HEK293 (cell line): ENCODE measurements at regions of chr7 and their contacts with region 1.

Region 1: DNA sequence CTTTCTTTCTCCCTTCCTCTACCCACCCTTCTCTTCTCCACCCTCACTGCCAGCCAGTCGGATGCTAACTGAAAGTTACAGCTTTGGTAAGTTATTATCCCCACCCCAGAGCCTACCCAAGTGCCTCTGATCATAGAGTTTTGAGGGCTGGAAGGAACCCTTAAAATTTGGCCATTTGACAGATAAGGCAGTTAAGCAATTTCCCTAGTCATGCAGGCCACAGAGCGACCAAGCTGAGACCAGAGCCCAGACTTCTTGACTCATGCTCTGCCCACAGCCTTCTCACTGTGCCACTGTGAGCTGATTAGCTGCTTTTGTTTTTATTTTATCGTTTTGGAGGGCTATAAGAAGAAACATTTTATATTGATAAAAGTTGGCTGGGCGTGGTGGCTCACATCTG is 17.2 kb downstream of the SAP25 start:
- H3K4me3 ChIP-seq: no peak overlapping the region
- H3K27ac ChIP-seq: no peak overlapping the region
- H3K4me1 ChIP-seq: no peaks in the 10 kb centered on the region
- CTCF ChIP-seq: no peak

Region 2: GRCh38 chr7:100469227-100470044 is 87.1 kb before region 1 on chr7:
- CTCF ChIA-PET with region 1: interaction called, 85 read pairs
- POLR2A ChIA-PET with region 1: interaction called, 4 read pairs
- H3K4me3 ChIP-seq: no peak overlapping the region
- H3K27ac ChIP-seq: no peak overlapping the region
- H3K4me1 ChIP-seq: peaks cover 3% of the 10 kb centered on the region; the same call in 1 of the 2 replicates
- CTCF ChIP-seq: peak; percentile 93

Region 3: GRCh38 chr7:100478966-100479665 is 77.4 kb before region 1 on chr7 and contains the start of gene TSC22D4:
- CTCF ChIA-PET with region 1: interaction called, 20 read pairs
- POLR2A ChIA-PET with region 1: interaction called, 9 read pairs
- H3K4me3 ChIP-seq: peak within 1 kb of the TSS; percentile 84
- H3K27ac ChIP-seq: peak within 1 kb of the TSS; percentile 80
- H3K4me1 ChIP-seq: peaks cover 7% of the 10 kb centered on the region
- CTCF ChIP-seq: no peak

Region 4: DNA sequence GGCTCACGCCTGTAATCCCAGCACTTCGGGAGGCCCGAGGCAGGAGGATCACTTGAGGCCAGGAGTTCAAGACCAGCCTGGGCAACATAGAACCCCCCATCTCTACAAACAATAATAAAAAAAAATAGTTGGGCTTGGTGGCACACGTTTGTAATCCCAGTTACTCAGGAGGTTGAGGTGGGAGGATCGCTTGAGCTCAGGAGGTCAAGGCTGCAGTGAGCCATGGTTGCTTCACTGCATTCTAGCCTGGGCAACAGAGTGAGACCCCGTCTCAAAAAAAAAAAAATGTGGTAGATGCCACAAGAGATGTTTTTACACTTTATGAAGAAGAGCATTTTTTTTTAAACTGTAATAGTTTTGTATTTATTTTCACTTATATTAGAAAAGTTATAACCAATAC is 60.0 kb before region 1 on chr7:
- CTCF ChIA-PET with region 1: interaction called, 16 read pairs
- POLR2A ChIA-PET with region 1: interaction called, 4 read pairs
- H3K4me3 ChIP-seq: no peak overlapping the region
- H3K27ac ChIP-seq: no peak overlapping the region
- H3K4me1 ChIP-seq: no peaks in the 10 kb centered on the region
- CTCF ChIP-seq: no peak

Region 5: DNA sequence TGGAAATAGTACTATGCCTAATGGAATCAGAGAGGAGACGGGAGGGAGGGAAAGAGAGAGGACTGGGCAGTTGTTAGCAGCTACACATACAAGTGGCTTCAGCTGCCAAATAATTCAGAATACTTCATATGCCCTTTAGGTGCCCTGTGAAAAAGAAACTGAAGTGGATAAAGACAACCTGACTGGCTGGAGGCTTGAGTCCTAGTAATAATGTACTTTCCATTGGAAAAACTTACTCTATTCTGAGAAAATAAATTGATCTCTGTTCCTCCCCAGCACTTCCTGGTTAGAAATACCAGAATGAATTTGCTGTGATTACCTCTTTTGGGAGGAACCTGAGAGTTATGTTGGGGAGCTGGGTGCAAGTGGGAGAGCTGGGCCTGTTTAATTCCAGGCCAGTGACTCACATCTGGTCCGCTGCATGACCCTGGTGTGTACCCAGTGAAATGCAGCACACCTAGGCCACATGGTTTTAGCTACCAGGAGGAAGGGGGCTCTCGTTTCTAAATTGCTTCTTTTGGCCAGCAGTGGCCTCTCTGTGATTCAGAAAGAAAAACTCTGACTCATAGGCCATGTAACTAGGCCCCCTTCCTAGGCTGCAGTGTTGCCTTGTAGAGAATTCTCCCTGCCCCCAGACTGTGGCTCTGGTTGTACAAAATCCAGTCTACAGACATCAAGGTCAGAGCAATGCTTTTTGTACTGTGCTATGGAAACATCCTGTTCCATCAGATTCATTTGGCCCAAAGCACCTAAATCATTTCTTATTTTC is 11.0 kb before region 1 on chr7:
- CTCF ChIA-PET with region 1: interaction called, 36 read pairs
- POLR2A ChIA-PET with region 1: no interaction called
- H3K4me3 ChIP-seq: no peak overlapping the region
- H3K27ac ChIP-seq: peak overlapping the region; percentile 72
- H3K4me1 ChIP-seq: peaks cover 39% of the 10 kb centered on the region
- CTCF ChIP-seq: peak; percentile 50; the same call in 1 of the 2 replicates

Region 6: DNA sequence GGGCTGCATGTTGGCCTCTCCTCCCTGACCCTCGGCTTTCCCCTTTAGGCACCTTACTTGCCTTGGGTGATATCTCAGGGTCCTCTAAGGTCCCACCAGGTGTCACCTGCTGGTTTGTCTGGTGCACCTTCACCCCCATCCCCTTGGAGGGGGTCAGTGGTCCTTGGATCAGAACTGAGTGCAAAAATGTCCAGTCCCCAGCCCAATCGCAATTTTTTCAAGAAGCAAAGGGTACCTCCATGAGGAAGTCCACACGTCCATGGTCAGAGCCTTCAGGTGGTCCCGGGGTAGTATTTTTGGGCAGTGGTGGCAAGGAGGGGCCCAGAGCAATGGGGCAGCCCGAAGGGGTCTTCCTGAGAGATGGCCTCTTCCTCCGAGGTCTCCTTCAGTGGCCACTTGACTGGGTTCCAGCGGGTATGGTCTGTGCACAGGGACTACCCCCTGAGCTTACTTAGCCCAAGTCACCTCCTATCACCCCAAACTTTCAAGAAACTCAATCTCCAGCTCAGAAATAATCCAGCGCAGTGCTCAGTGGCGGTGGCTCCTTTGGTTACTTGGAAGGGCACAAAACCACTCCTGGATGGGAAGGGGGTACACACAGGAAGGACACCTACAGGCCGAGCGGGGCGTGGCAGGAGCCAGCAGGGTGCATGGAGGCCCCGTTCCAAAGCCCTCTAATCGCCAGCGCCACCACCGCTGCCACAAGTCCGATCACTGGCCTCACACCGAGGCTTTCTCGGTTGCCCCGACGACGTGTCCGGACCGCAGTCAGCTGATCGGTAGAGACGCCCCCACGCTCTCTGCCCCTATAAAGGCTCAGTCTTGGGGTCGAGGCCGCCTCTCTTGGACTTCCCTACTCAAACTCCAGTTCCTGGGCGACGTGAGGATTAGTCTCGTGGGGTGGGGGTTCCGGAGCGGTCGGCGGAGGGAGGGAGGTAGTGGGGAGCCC is 12.6 kb after region 1 on chr7:
- CTCF ChIA-PET with region 1: interaction called, 14 read pairs
- POLR2A ChIA-PET with region 1: interaction called, 4 read pairs
- H3K4me3 ChIP-seq: no peak overlapping the region
- H3K27ac ChIP-seq: no peak overlapping the region
- H3K4me1 ChIP-seq: peaks cover 2% of the 10 kb centered on the region; the same call in 1 of the 2 replicates
- CTCF ChIP-seq: peak; percentile 87

Region 7: DNA sequence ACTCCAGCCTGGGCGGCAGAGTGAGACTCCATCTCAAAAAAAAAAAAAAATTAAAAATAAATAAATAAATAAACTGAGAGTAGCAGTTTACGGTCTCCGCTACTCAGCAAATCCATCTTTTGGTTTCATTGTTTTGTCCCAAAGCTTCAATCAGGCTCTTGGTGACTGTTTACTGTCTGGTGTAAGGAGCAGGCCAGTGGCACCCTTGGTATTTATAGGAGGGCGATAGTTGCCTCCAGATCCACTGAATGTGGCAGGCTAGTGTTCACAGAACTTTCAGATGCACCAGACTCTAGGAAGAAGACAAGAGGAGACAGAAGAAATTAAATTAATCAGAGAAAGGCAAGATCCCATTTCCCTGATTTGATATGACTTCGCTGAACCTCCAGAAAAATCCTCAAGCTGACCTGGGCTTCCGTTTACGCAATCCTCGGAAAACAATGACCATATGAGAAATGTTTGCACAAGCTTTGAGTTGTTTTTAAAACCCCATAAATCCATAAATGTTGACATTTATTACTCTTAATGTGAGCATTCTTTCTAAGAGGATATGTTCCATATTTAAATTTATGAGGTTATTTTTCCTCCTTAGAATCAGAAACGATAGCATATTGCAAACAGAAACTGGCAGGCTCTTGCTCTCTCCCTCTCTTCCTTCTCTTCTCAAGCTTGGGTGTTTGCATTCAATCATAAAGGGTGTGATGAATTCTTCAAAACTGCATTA is 385.7 kb after region 1 on chr7:
- CTCF ChIA-PET with region 1: no interaction called
- POLR2A ChIA-PET with region 1: no interaction called
- H3K4me3 ChIP-seq: no peak overlapping the region
- H3K27ac ChIP-seq: no peak overlapping the region
- H3K4me1 ChIP-seq: peaks cover 4% of the 10 kb centered on the region; the same call in 1 of the 2 replicates
- CTCF ChIP-seq: no peak